ENCODE measurements at regions of chr7 and their contacts with region 1.

Region 1: DNA sequence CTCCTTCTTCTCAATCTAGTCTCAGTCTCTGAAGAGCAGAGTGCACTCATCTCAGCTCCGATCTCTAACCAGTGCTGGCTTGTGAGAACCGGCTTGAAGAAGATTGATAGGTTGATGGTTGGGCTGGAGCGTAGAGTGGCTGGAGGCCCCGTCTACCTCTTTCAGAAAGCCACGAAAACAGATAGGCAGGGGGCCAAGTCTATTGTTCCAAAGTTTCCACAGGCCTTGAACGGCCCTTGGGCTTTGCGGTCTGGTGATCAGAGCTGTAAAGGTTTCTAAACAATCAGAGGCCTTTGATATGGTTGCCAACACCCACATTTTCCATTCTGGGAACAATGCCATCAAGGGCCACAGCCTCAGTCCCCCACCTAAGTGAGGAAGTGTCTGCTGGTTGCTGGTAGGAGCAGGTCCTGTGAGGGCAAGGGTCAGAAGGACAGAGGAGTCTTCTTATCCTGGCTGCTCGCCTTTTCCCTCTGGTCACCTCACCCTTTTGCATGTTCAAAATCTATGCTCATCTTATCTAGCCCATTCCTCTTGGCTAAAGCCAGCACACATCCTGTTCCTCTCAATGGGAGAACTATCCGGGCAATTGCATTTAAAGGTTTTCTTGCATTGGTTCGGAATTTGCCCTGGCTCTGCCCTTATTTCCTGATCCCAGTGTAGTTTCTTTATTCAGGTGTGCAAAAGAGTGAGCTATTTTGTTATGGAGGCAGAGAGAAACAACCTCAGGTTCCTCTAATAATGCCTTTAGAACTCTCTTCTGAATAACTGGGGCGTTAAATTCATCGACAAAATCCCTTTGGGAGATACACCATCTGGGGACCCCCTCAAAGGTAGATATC is 70.3 kb upstream of the KMT2E start:
- DNase-seq: peak; percentile 82
- H3K4me3 Mint-ChIP-seq: peak overlapping the region; percentile 97
- H3K27ac Mint-ChIP-seq: peak overlapping the region; percentile 100
- H3K4me1 Mint-ChIP-seq: peaks cover 59% of the 10 kb centered on the region
- H3K27me3 Mint-ChIP-seq: no peaks in the 10 kb centered on the region

Region 2: GRCh38 chr7:104553074-104553473 is 390.6 kb before region 1 on chr7:
- CTCF ChIA-PET with region 1: no interaction called
- intact Hi-C with region 1: no loop called
- DNase-seq: no peak
- H3K4me3 Mint-ChIP-seq: no peak overlapping the region
- H3K27ac Mint-ChIP-seq: no peak overlapping the region
- H3K4me1 Mint-ChIP-seq: no peaks in the 10 kb centered on the region
- H3K27me3 Mint-ChIP-seq: peaks cover 1% of the 10 kb centered on the region

Region 3: DNA sequence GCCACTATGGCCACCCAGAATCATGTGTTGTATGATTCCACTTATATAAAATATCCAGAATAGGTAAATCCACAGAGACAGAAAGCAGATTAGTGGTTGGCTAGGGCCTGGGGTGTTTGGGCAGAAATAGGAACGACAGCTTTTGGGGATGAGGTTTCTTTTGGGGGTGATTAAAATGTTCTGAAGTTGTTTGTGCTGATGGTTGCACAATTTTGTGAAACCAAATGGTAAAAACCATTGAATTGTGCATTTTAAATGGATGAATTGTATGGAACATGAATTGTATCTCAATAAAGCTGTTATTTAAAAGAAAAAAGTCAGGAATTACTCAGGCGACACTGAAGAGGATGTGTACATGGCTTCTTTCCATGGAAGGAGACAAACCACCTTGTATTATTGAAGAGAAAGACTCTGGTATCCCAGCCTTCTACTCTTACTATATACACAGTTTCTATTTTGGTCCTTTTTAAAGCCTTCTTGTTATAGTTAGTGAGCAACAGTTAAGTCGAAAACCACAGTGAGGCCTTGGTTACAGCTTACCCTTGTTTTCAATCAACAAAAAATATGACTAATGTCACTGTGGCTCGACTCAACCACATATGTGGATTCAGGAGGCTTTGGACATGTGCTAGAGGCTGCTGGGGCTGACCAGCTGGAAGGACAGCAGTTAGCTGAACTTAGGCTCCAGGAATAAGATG is 13.2 kb after region 1 on chr7:
- CTCF ChIA-PET with region 1: interaction called, 4 read pairs
- intact Hi-C with region 1: loop called (anchors 1 kb)
- DNase-seq: peak; percentile 38
- H3K4me3 Mint-ChIP-seq: no peak overlapping the region
- H3K27ac Mint-ChIP-seq: peak overlapping the region; percentile 74
- H3K4me1 Mint-ChIP-seq: peaks cover 19% of the 10 kb centered on the region
- H3K27me3 Mint-ChIP-seq: no peaks in the 10 kb centered on the region

Region 4: GRCh38 chr7:105209870-105210269 is 266.1 kb after region 1 on chr7:
- CTCF ChIA-PET with region 1: no interaction called
- intact Hi-C with region 1: loop called (anchors 1 kb)
- DNase-seq: peak; percentile 28
- H3K4me3 Mint-ChIP-seq: no peak overlapping the region
- H3K27ac Mint-ChIP-seq: no peak overlapping the region
- H3K4me1 Mint-ChIP-seq: peaks cover 65% of the 10 kb centered on the region
- H3K27me3 Mint-ChIP-seq: no peaks in the 10 kb centered on the region

Region 5: DNA sequence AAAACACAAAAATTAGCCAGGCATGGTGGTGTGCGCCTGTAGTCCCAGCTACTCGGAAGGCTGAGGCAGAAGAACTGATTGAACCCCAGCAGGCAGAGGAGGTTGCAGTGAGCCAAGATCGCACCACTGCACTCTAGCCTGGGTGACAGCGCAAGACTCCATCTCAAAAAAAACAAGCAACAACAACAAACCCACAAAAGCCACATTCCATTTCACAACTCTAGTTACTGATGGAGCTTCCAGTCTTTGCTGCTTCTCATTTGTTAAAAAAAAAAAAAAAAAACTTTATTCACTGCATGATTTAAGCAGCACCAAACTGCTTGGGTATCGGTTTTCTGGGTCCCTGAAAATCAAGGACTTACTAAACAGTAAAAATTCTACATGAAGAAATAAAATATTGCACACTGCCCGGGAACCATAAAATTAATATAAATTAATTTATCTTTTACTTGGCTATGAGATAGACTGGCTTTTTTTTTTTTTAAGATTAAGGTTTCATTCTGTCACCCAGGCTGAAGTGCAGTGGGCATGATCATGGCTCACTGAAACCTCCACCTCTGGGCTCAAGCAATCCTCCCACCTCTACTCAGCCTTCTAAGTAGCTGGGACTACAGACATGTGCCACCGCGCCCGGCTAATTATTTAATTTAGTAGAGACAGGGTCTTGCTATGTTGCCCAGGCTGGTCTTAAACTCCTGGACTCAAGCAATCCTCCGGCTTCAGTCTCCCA is 403.0 kb after region 1 on chr7:
- CTCF ChIA-PET with region 1: no interaction called
- intact Hi-C with region 1: loop called (anchors 2 kb)
- DNase-seq: no peak
- H3K4me3 Mint-ChIP-seq: no peak overlapping the region
- H3K27ac Mint-ChIP-seq: no peak overlapping the region
- H3K4me1 Mint-ChIP-seq: peaks cover 66% of the 10 kb centered on the region
- H3K27me3 Mint-ChIP-seq: no peaks in the 10 kb centered on the region

Region 6: GRCh38 chr7:105678811-105679495 is 735.2 kb after region 1 on chr7:
- CTCF ChIA-PET with region 1: no interaction called
- intact Hi-C with region 1: loop called (anchors 5 kb)
- DNase-seq: peak; percentile 60
- H3K4me3 Mint-ChIP-seq: peak overlapping the region; percentile 82
- H3K27ac Mint-ChIP-seq: peak overlapping the region; percentile 86
- H3K4me1 Mint-ChIP-seq: peaks cover 59% of the 10 kb centered on the region
- H3K27me3 Mint-ChIP-seq: no peaks in the 10 kb centered on the region

Region 7: GRCh38 chr7:106022193-106022821 is 1078.6 kb after region 1 on chr7:
- CTCF ChIA-PET with region 1: no interaction called
- intact Hi-C with region 1: loop called (anchors 5 kb)
- DNase-seq: peak; percentile 82
- H3K4me3 Mint-ChIP-seq: peak overlapping the region; percentile 19
- H3K27ac Mint-ChIP-seq: peak overlapping the region; percentile 62
- H3K4me1 Mint-ChIP-seq: peaks cover 71% of the 10 kb centered on the region
- H3K27me3 Mint-ChIP-seq: no peaks in the 10 kb centered on the region

Region 8: GRCh38 chr7:106767498-106768323 is 1824.0 kb after region 1 on chr7:
- CTCF ChIA-PET with region 1: no interaction called
- intact Hi-C with region 1: loop called (anchors 5 kb)
- DNase-seq: peak; percentile 25
- H3K4me3 Mint-ChIP-seq: peak overlapping the region; percentile 20
- H3K27ac Mint-ChIP-seq: peak overlapping the region; percentile 13
- H3K4me1 Mint-ChIP-seq: peaks cover 43% of the 10 kb centered on the region
- H3K27me3 Mint-ChIP-seq: no peaks in the 10 kb centered on the region

Measured in activated naive CD4-positive, alpha-beta T cell treated with anti-CD3 and anti-CD28 coated beads for 36 hours (primary cell).